CD14-positive monocyte (primary cell): ENCODE measurements at regions of chr6 and their contacts with region 1.

Region 1: DNA sequence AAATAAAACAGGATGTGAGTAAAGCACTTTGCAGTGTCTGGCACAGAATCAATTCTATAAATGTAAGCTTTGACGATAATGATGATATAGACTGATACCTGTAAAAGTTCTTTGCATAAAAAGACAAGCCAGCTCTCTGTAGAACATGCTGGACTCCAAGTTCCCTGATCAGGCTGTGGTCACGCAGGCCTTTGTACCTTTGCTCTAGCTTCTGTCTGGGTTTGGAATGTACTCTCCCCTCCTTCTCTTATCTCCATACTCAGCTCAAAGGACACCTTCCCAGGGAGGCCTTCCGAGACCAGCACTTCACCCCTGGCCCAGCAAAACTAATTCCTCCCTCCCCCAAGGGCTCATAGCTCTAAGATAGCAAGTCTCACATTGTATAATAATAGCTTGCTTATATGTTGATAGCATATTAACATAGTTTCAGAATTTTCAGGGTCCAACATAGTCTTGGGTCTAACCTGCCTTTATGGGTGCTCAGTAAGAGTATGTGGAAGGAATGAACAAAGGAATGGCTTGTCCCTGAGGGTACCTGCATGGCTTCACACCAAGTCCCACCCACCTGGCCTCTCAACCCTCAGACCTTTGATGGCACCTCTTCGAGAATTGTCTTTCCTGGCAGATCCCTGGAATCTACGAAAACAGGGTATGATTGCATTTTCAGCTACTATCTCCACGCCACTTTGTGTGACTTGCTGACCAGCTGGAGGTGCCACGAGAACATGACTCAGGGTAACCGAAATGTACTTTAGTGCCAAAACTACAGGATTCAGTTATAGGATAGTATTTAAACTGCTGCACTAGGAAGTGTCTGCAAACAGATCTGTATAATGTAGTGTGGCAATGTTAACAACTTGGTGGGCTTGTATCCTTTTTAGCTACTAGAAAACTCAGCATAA is 41.7 kb upstream of the PIM1 start:
- DNase-seq: no peak
- H3K4me3 ChIP-seq: no peak overlapping the region
- H3K4me3 Mint-ChIP-seq: no peak overlapping the region
- H3K27ac ChIP-seq: no peak overlapping the region
- H3K27ac Mint-ChIP-seq: peak overlapping the region in 2 of 7 donors; percentile 26 to 54
- H3K4me1 ChIP-seq: peaks cover 31 to 36% of the 10 kb centered on the region in 2 donors
- H3K4me1 Mint-ChIP-seq: peaks cover 30% of the 10 kb centered on the region
- H3K27me3 ChIP-seq: no peaks in the 10 kb centered on the region
- H3K27me3 Mint-ChIP-seq: peaks cover 0 to 4% (median 2%) of the 10 kb centered on the region in 3 donors
- CTCF ChIP-seq: no peak

Region 2: GRCh38 chr6:37083243-37084138 is 44.7 kb before region 1 on chr6:
- intact Hi-C with region 1: loop called in 1 of 2 experiments (anchors 5 kb)
- DNase-seq: peak; percentile 74 to 86 (median 77)
- H3K4me3 ChIP-seq: peak overlapping the region; percentile 4 to 68 (median 20)
- H3K4me3 Mint-ChIP-seq: peak overlapping the region; percentile 66 to 84
- H3K27ac ChIP-seq: peak overlapping the region; percentile 78 to 86
- H3K27ac Mint-ChIP-seq: peak overlapping the region; percentile 90 to 98 (median 97)
- H3K4me1 ChIP-seq: peaks cover 43 to 45% of the 10 kb centered on the region in 2 donors
- H3K4me1 Mint-ChIP-seq: peaks cover 50% of the 10 kb centered on the region
- H3K27me3 ChIP-seq: no peaks in the 10 kb centered on the region
- H3K27me3 Mint-ChIP-seq: peaks cover 0 to 3% (median 2%) of the 10 kb centered on the region in 3 donors
- CTCF ChIP-seq: no peak

Region 3: DNA sequence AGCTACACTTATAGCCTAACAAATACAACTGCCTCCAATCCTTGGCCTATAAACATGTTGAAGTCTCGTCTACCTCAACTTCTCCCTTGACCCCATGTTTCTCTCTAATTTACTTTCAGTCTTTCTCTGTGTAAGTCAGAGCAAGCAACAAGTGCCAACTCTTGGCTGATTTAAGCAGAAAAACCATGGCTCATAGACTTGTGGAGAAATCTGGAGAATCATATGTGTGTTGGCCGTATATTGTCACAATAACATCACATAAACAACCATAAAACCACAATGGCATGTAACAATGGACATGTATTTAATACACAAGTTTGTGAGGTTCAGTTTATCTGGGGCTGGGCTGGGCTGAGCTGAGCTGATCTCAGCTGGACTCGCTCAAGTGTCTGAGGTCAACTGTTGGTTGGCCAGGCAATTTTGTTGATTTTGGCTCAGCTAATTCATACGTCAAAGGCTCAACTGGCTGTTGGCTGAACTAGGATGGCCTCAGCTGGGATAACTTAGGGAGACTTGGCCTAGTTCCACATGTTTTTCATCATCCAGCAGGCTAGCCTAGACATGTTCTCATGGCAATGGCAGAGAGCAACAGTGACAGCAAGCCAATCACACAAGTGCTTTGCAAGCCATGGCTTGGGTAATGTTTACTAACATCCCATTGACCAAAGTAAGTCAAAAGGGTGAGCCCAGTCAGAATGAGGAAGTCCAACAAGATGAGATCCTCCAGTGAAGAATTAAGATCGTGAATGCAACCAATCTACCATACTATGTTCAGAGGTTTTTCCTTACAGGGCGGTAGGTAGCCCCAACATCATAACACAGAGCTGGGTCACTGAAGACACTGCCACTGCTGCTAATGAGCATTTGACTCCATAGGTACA is 116.5 kb after region 1 on chr6:
- intact Hi-C with region 1: no loop called
- DNase-seq: peak; percentile 25 to 42 (median 33)
- H3K4me3 ChIP-seq: no peak overlapping the region
- H3K4me3 Mint-ChIP-seq: no peak overlapping the region
- H3K27ac ChIP-seq: no peak overlapping the region
- H3K27ac Mint-ChIP-seq: peak overlapping the region in 4 of 7 donors; percentile 15 to 53 (median 22)
- H3K4me1 ChIP-seq: peaks cover 14 to 18% of the 10 kb centered on the region in 2 donors
- H3K4me1 Mint-ChIP-seq: peaks cover 20% of the 10 kb centered on the region
- H3K27me3 ChIP-seq: no peaks in the 10 kb centered on the region
- H3K27me3 Mint-ChIP-seq: peaks cover 0 to 2% (median 0%) of the 10 kb centered on the region in 3 donors
- CTCF ChIP-seq: no peak